ENCODE measurements at regions of chr4 and their contacts with region 1.

Region 1: GRCh38 chr4:94406668-94407437 is 44.9 kb upstream of the PDLIM5 start:
- DNase-seq: peak; percentile 80 to 82
- H3K4me3 ChIP-seq: no peak overlapping the region
- H3K4me1 ChIP-seq: peaks cover 4% of the 10 kb centered on the region
- H3K27me3 ChIP-seq: no peaks in the 10 kb centered on the region

Region 2: DNA sequence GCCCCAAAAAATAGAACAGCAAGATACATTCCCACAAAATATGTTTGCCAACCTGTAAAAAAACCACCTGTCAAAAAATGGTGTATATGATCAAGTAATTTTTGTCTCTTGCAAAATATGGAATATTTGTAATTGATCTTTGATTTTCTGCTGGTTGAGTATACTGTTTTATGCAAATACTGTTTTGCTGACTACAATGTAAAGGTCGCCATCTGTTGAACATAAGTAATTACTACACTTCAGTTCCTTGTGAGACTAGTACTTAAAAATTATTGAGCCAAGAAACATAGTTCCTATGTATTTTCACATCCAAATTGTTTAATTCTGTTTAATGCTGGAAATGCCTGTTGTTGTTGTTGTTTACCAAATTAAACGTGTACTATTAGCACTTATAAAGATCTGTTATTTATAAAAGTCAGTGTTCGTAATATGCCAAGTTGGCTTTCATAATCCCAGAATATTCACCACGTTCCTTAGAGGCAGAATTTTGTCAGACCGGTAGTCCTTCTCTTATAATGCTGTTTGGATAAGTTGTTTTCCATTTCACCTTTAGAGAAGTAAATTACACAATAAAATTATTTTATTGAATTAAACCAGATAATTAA is 189.1 kb after region 1 on chr4:
- in situ Hi-C with region 1: loop called (anchors 10 kb)
- DNase-seq: peak in 1 of 2 experiments; percentile 76
- H3K4me3 ChIP-seq: no peak overlapping the region
- H3K4me1 ChIP-seq: no peaks in the 10 kb centered on the region
- H3K27me3 ChIP-seq: no peaks in the 10 kb centered on the region

Measured in HAP-1 (cell line).